Breast epithelium (tissue), 4 donors: ENCODE measurements at regions of chr5 and their contacts with region 1.

Region 1: DNA sequence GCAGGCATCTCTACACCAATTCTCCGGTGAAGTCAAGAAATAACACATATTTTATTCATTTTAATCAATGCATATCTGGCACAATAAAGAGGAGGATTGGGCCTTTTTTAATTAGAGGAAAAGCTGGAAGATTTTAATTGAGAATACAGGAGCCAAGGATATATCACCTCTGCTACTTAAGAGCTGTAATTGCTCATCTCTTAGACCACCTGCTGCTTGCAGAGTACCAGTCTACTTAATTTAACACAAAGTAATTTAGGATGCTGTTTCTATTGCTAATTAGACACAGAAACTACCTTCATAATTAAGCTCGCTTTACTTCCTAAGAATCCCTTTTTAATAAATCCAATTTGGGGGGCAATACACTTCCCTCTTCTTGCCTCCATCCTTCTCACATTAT is 326.9 kb downstream of the TENT4A start:
- DNase-seq: no peak
- H3K4me3 ChIP-seq: no peak overlapping the region
- H3K27ac ChIP-seq: no peak overlapping the region
- H3K4me1 ChIP-seq: no peaks in the 10 kb centered on the region
- H3K27me3 ChIP-seq: no peaks in the 10 kb centered on the region
- CTCF ChIP-seq: no peak
- POLR2A ChIP-seq: no peak

Region 2: DNA sequence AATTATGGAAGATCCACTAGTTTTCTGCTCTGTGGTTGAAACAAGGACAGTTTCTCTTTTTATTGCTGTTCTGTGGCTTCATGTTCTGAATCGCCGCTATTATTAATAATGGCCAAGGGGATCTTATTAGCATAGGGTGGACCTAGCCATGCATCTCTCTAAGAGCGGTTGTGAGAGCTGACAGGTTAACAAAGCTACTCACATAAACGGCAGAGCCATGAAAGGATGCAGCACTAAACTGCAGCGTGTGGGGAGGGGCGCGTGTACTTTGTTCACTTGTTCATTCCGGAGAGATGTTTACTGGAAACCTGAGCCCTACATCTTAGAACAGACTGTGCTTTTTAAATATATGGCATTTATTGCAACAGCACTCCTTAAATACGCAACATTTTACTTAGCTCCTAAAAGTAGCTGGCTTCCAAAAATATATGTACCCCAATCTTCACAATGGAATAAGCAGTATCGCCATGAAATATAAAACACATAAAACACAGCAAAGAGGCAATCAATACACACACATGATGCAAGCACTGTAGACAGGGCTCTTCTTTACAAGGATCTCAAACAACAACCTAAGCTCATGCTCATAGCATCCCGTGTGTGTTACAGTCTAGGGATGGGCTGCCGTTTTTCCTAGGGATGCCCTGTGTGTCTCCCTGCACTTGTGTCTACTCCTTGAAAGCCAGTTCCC is 1086.4 kb before region 1 on chr5:
- intact Hi-C with region 1: loop called (anchors 5 kb)
- DNase-seq: no peak
- H3K4me3 ChIP-seq: no peak overlapping the region
- H3K27ac ChIP-seq: no peak overlapping the region
- H3K4me1 ChIP-seq: no peaks in the 10 kb centered on the region
- H3K27me3 ChIP-seq: no peaks in the 10 kb centered on the region
- CTCF ChIP-seq: no peak
- POLR2A ChIP-seq: no peak

Region 3: GRCh38 chr5:6644662-6645275 is 395.3 kb before region 1 on chr5:
- intact Hi-C with region 1: no loop called
- DNase-seq: no peak
- H3K4me3 ChIP-seq: no peak overlapping the region
- H3K27ac ChIP-seq: no peak overlapping the region
- H3K4me1 ChIP-seq: no peaks in the 10 kb centered on the region
- H3K27me3 ChIP-seq: no peaks in the 10 kb centered on the region
- CTCF ChIP-seq: no peak
- POLR2A ChIP-seq: no peak

Region 4: DNA sequence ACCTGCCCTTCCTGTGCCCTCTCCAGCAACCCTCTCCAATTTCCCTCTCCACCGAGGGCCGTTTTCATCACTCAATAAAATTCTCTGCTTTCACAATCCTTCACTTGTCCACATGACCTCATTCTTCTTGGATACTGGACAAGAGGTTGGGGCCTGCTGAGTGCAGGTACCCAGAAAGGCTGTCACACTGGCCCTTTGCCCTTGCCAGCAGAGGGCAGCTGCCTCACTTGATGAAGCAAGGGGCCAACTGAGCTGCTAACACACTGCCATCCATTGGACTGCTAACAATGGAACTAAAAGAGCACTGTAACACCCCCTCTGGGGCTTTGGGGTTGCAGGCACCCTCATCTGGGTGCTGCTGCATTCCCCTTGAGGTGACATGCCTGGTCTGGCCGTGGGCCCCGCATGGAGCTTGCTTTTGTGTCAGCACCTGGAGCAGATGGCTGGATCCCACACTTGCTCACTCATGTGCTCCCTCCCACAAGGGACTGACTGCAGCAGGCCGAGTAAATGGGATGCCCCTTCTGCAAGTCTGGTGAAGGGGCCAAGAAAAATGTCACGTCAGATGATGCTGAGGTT is 47.7 kb after region 1 on chr5:
- intact Hi-C with region 1: no loop called
- DNase-seq: no peak
- H3K4me3 ChIP-seq: no peak overlapping the region
- H3K27ac ChIP-seq: no peak overlapping the region
- H3K4me1 ChIP-seq: no peaks in the 10 kb centered on the region
- H3K27me3 ChIP-seq: no peaks in the 10 kb centered on the region
- CTCF ChIP-seq: no peak
- POLR2A ChIP-seq: no peak

Region 5: GRCh38 chr5:7131680-7132079 is 91.6 kb after region 1 on chr5:
- intact Hi-C with region 1: no loop called
- DNase-seq: no peak
- H3K4me3 ChIP-seq: no peak overlapping the region
- H3K27ac ChIP-seq: no peak overlapping the region
- H3K4me1 ChIP-seq: no peaks in the 10 kb centered on the region
- H3K27me3 ChIP-seq: no peaks in the 10 kb centered on the region
- CTCF ChIP-seq: no peak
- POLR2A ChIP-seq: no peak